ENCODE measurements at regions of chr22 and their contacts with region 1.

Region 1: DNA sequence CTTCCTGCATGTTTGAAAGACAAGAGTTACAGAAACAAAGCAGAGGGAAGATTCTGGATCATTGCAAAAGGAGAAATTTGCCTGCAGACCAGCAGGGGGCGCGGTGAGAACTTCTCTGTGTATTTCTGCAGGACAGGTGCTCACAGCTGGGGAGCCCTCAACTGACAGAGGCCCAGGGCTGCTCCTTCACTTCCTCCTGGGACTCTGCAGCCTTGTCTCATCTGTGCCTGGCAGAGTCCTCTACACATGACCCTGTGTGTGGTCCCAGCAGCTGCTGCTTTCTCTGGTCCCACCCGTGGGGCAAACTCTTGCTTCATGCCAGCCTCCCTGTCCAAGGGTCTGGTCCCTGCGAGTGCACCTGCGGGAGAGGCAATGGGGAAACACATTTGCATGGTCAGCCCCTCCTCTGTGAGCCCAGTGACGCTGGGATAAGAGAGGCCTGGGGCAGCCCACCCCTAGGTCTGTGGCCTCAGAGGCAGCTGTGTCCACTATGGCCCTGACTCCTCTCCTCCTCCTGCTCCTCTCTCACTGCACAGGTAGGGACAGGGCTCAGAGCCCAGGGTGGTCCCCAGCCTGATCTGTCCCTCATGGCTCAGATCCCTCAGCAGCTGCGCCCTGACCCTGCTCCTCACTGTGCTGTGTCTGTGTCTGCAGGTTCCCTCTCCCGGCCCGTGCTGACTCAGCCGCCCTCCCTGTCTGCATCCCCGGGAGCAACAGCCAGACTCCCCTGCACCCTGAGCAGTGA is 43.2 kb upstream of the VPREB1 start:
- DNase-seq: peak; percentile 80
- CTCF ChIP-seq: peak; percentile 85

Region 2: DNA sequence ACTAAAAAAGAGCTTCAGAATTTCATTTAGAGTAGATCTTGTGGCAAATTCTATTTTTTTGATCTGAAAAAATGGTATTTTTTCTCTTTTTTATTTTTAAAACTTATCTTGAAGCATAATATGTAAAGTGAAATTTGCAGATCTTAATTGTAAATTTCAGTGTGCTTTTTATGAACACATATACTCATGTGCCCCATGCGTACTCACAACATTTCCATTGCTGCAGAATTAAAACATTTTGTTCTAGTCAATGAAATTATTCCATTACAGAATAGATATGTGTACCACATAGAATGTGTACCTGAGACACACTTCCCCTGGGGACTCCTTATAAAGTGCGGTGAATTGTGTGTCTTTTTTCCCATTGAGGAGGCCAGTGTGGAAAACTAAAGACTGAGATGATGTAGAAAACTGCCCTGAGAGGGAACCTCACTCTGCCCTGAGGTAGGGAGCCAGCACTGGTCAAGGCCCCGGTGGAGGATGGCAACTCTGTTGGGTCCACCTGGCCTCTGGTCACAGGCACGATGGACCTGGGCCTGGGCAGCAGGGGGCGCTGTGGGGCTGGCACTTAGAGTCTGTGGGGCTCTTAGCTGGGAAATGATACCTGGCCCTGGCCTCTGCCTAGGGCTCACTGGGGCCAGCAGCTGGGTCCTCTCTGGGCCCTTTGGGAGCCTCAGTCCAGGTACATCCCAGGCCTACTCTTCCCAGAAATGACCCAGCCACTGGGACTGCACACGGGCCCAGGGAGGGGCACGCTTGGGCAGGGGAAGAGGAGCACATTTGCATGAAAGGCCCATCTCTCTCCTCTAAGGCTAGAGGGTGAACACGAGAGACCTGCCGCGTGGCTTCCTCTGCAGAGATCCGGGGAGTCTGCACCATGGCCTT is 140.9 kb before region 1 on chr22:
- CTCF ChIA-PET with region 1: interaction called, 16 read pairs
- POLR2A ChIA-PET with region 1: no interaction called
- DNase-seq: peak; percentile 89
- CTCF ChIP-seq: peak; percentile 93

Region 3: GRCh38 chr22:22161924-22162851 is 39.2 kb before region 1 on chr22:
- CTCF ChIA-PET with region 1: interaction called, 55 read pairs
- POLR2A ChIA-PET with region 1: no interaction called
- DNase-seq: peak; percentile 81
- CTCF ChIP-seq: no peak

Region 4: GRCh38 chr22:22181341-22181850 is 20.0 kb before region 1 on chr22:
- CTCF ChIA-PET with region 1: interaction called, 61 read pairs
- POLR2A ChIA-PET with region 1: no interaction called
- DNase-seq: no peak
- CTCF ChIP-seq: no peak

Region 5: GRCh38 chr22:22226448-22227187 is 25.3 kb after region 1 on chr22:
- CTCF ChIA-PET with region 1: interaction called, 350 read pairs
- POLR2A ChIA-PET with region 1: no interaction called
- DNase-seq: no peak
- CTCF ChIP-seq: no peak